A549 (cell line): ENCODE measurements at regions of chr1 and their contacts with region 1.

Region 1: GRCh38 chr1:10494754-10495474 is 20.2 kb downstream of the PEX14 start:
- DNase-seq: peak; percentile 47 to 76
- ATAC-seq: peak; percentile 85 to 94
- H3K4me3 ChIP-seq: no peak overlapping the region; the same call in 2 of the 3 replicates
- H3K27ac ChIP-seq: peak overlapping the region; percentile 21 to 74; a peak in 5 of 6 replicates
- H3K4me1 ChIP-seq: peaks cover 5% of the 10 kb centered on the region; the same call in 1 of the 3 replicates
- CTCF ChIP-seq: peak; percentile 79
- EP300 ChIP-seq: no peak
- POLR2A ChIP-seq: no peak
- RAD21 ChIP-seq: peak; percentile 72 to 79

Region 2: DNA sequence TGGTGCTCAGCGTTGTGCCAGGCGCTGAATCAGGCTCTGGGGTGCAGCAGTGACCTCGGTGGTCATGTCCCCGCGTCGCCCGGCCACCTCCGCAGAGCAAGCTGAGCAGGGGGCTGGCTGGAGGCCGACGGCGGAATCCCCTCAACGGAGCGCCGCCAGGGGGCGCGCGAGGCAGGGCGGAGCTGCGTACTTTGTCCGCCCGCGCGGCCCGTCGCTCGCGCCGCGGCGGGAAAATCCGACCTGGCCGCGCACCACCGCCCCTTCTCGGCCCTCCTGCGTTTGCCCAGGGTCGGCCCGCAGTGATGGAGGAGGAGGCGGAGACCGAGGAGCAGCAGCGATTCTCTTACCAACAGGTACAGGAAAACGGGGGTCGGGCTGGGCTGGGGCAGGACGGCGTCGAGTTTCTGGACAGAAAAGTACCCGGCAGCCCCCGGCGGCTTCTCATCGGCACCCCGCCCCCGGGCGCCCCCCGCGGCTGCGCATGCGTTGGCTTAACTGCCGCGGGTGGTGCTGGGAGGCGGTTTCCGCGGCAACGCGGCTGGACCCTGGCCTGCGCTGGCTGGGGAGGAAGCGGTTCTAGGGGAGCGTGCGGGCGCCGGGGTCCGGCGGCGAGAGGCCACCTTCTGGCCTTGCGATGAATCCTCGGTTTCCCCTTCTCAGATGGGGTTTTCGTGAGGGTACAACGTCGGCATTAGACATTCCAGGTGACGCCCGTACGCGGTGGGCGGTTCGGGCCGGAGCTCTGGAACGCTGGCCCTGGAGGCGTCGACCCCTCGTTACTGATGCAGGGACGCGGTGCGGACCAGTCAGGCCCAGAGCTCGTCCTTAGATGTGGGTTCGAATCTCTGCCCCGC is 64.5 kb before region 1 on chr1 and contains the start of gene CENPS:
- CTCF ChIA-PET with region 1: interaction called, 59 read pairs
- POLR2A ChIA-PET with region 1: interaction called, 6 read pairs
- DNase-seq: peak; percentile 80 to 82
- ATAC-seq: peak; percentile 83 to 86
- H3K4me3 ChIP-seq: peak within 1 kb of the TSS; percentile 87
- H3K27ac ChIP-seq: peak within 1 kb of the TSS; percentile 87 to 97
- H3K4me1 ChIP-seq: peaks cover 18% of the 10 kb centered on the region
- CTCF ChIP-seq: peak; percentile 79
- EP300 ChIP-seq: no peak
- POLR2A ChIP-seq: peak; percentile 47
- RAD21 ChIP-seq: peak; percentile 42 to 62; a peak in 4 of 5 replicates
- polyA plus RNA-seq, gene CENPS: 19.7 and 25.7 TPM in 2 replicates

Region 3: GRCh38 chr1:10444795-10445397 is 50.0 kb before region 1 on chr1:
- CTCF ChIA-PET with region 1: interaction called, 12 read pairs
- POLR2A ChIA-PET with region 1: no interaction called
- DNase-seq: no peak
- ATAC-seq: no peak
- H3K4me3 ChIP-seq: no peak overlapping the region
- H3K27ac ChIP-seq: no peak overlapping the region
- H3K4me1 ChIP-seq: no peaks in the 10 kb centered on the region
- CTCF ChIP-seq: no peak
- EP300 ChIP-seq: no peak
- POLR2A ChIP-seq: no peak
- RAD21 ChIP-seq: no peak

Region 4: GRCh38 chr1:10459181-10459580 is 35.7 kb before region 1 on chr1:
- CTCF ChIA-PET with region 1: interaction called, 10 read pairs
- POLR2A ChIA-PET with region 1: no interaction called
- DNase-seq: peak; percentile 33 to 65
- ATAC-seq: peak; percentile 81 to 84
- H3K4me3 ChIP-seq: no peak overlapping the region
- H3K27ac ChIP-seq: peak overlapping the region; percentile 68 to 81
- H3K4me1 ChIP-seq: peaks cover 18% of the 10 kb centered on the region
- CTCF ChIP-seq: no peak
- EP300 ChIP-seq: no peak
- POLR2A ChIP-seq: no peak
- RAD21 ChIP-seq: no peak

Region 5: DNA sequence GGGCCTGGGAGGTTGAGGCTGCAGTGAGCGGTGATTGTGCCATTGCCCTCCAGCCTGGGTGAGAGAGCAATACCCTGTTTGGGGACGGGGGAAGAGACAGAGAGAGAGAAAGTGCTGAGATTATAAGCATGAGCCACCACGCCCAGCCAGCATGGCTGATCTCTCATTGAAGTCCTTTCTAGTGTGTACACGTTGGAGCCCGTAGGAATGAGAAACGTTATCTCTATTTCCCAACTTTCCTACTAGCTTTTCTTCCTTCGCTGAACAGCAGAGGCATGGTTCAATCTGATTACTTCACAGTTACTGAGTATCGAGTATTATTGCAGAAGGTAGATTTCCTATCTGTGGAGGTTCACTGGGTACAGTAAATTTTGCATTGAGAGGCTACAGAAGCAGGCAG is 15.6 kb before region 1 on chr1:
- CTCF ChIA-PET with region 1: interaction called, 27 read pairs
- POLR2A ChIA-PET with region 1: no interaction called
- DNase-seq: no peak
- ATAC-seq: no peak
- H3K4me3 ChIP-seq: no peak overlapping the region
- H3K27ac ChIP-seq: no peak overlapping the region
- H3K4me1 ChIP-seq: peaks cover 9% of the 10 kb centered on the region; the same call in 2 of the 3 replicates
- CTCF ChIP-seq: no peak
- EP300 ChIP-seq: no peak
- POLR2A ChIP-seq: no peak
- RAD21 ChIP-seq: no peak

Region 6: DNA sequence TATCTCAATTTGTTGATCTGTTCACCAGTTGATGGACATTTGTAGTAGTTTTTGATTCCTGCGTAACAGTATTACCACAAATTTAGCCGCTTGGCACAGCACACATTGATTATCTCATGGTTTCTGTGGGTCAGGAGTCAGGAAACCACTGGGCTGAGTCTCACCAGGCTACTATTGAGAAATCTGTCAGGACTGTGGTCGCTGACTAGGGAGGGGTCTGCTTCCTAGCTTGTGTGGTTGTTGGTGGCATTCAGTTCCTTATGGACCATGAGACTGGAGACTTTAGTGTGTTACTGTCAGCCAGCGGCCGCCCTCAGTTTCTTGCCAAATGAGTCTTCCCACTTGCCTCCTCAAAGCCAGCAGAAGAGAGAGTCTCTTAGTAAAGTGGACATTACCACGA is 10.4 kb before region 1 on chr1:
- CTCF ChIA-PET with region 1: interaction called, 27 read pairs
- POLR2A ChIA-PET with region 1: no interaction called
- DNase-seq: no peak
- ATAC-seq: no peak
- H3K4me3 ChIP-seq: no peak overlapping the region
- H3K27ac ChIP-seq: no peak overlapping the region
- H3K4me1 ChIP-seq: peaks cover 3% of the 10 kb centered on the region; the same call in 1 of the 3 replicates
- CTCF ChIP-seq: no peak
- EP300 ChIP-seq: no peak
- POLR2A ChIP-seq: no peak
- RAD21 ChIP-seq: no peak

Region 7: GRCh38 chr1:10507111-10507879 is 12.4 kb after region 1 on chr1:
- CTCF ChIA-PET with region 1: interaction called, 70 read pairs
- POLR2A ChIA-PET with region 1: no interaction called
- DNase-seq: peak; percentile 65 to 70
- ATAC-seq: peak; percentile 85 to 87
- H3K4me3 ChIP-seq: no peak overlapping the region
- H3K27ac ChIP-seq: no peak overlapping the region
- H3K4me1 ChIP-seq: peaks cover 40% of the 10 kb centered on the region
- CTCF ChIP-seq: peak; percentile 73
- EP300 ChIP-seq: no peak
- POLR2A ChIP-seq: no peak
- RAD21 ChIP-seq: peak; percentile 79 to 83